RWPE1 (cell line): ENCODE measurements at regions of chr7 and their contacts with region 1.

Region 1: DNA sequence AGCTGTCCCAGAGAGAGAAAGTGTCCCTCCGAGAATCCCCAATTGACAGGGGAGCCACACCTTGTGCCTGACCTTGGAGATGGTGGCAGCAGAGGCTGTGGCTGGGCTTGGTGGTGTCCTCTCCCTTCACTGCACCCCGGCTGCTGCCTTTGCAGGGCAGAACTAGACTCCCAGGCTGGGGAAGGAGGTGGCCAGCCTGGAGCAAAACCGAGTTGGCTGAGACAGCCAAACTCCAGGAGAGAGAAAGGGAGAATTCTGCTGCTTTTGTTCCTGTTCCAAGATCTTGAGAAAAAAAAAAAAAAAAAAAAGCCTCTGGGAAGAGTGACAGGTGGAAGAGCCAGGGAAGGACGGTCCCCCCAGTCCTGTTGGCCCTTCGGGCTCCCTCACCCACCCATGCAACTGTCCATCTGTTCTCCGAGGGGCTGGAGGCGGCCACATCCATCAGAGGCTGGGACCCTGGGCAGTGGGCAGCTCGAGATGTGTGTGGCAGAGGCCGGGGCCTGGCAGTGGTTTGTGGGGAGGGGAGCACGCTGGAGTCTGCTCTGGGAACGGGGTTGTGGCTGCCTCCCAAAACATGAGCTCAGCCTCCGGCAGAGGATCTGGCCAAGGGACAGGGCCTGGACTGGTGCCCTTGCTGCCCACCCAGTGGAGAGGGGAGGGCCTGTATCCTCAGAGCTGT is 35.5 kb downstream of the CLIP2 start:
- DNase-seq: no peak
- H3K27ac ChIP-seq: peak overlapping the region; percentile 35
- CTCF ChIP-seq: no peak

Region 2: DNA sequence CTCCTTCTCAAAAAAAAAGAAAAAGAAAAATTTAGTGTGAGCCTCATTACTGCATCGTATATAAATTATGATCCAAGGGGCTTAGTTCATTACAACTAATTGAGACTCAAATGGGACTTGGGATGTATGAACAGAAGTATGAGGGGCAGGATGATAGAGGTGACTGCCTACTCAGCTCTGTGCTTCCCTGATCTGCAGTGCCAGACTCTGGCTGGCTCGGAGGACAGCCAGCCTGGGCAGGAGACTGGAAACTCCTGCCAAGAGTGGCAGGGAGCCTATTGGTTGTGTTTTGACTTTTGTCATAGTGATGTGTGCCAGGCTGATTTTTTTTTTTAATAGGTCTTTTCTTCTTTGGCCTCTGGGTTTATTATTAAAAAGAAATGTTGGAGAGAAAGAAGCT is 55.3 kb after region 1 on chr7:
- CTCF ChIA-PET with region 1: interaction called, 11 read pairs
- POLR2A ChIA-PET with region 1: no interaction called
- DNase-seq: no peak
- H3K27ac ChIP-seq: peak overlapping the region; percentile 42
- CTCF ChIP-seq: no peak